Esophagus muscularis mucosa (tissue), 4 donors: ENCODE measurements at regions of chr20 and their contacts with region 1.

Region 1: DNA sequence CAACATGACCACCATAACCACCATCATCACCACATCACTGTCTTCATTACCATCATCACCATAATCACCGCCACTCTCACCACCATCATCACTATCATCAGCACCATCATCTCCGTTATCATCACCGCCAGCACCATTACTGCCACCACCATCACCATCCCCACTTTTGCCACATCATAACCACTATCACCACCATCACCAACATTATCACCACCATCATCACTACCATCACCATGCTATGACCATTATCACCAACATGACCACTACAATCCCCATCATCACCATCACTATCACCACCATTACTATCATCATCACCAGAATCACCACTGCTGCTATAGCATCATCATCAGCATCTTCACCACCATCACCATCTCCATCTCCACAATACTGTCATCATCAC is 25.7 kb downstream of the CST2 start:
- DNase-seq: no peak
- H3K4me3 ChIP-seq: no peak overlapping the region
- H3K27ac ChIP-seq: no peak overlapping the region
- H3K4me1 ChIP-seq: peaks cover 0 to 5% (median 0%) of the 10 kb centered on the region in 4 donors
- H3K27me3 ChIP-seq: no peaks in the 10 kb centered on the region
- CTCF ChIP-seq: no peak
- EP300 ChIP-seq: no peak
- POLR2A ChIP-seq: no peak

Region 2: GRCh38 chr20:23879811-23880374 is 79.0 kb after region 1 on chr20:
- intact Hi-C with region 1: loop called (anchors 5 kb)
- DNase-seq: peak; percentile 87
- H3K4me3 ChIP-seq: no peak overlapping the region
- H3K27ac ChIP-seq: peak overlapping the region; percentile 77 to 83 (median 78)
- H3K4me1 ChIP-seq: peaks cover 0 to 88% (median 82%) of the 10 kb centered on the region in 4 donors
- H3K27me3 ChIP-seq: no peaks in the 10 kb centered on the region
- CTCF ChIP-seq: no peak
- EP300 ChIP-seq: no peak
- POLR2A ChIP-seq: no peak